WTC11 (cell line): ENCODE measurements at regions of chr10 and their contacts with region 1.

Region 1: GRCh38 chr10:32256613-32257437 is 90.1 kb downstream of the EPC1 start:
- DNase-seq: peak; percentile 69
- ATAC-seq: peak; percentile 61
- H3K4me3 Mint-ChIP-seq: no peak overlapping the region
- H3K27ac Mint-ChIP-seq: 0 out of 2 replicates have a peak overlapping the region, but pooled peaks have one; percentile 60
- H3K4me1 Mint-ChIP-seq: peaks cover 11% of the 10 kb centered on the region
- H3K27me3 Mint-ChIP-seq: no peaks in the 10 kb centered on the region
- CTCF ChIP-seq: peak; percentile 72

Region 2: GRCh38 chr10:32180371-32181280 is 76.2 kb before region 1 on chr10:
- CTCF ChIA-PET with region 1: no interaction called
- POLR2A ChIA-PET with region 1: no interaction called
- DNase-seq: no peak
- ATAC-seq: no peak
- H3K4me3 Mint-ChIP-seq: no peak overlapping the region
- H3K27ac Mint-ChIP-seq: no peak overlapping the region
- H3K4me1 Mint-ChIP-seq: no peaks in the 10 kb centered on the region
- H3K27me3 Mint-ChIP-seq: no peaks in the 10 kb centered on the region
- CTCF ChIP-seq: no peak

Region 3: GRCh38 chr10:32266979-32267378 is 10.2 kb after region 1 on chr10:
- CTCF ChIA-PET with region 1: interaction called, 16 read pairs
- POLR2A ChIA-PET with region 1: interaction called, 4 read pairs
- DNase-seq: peak; percentile 38
- ATAC-seq: peak; percentile 98
- H3K4me3 Mint-ChIP-seq: peak overlapping the region; percentile 40
- H3K27ac Mint-ChIP-seq: peak overlapping the region; percentile 89
- H3K4me1 Mint-ChIP-seq: peaks cover 39% of the 10 kb centered on the region
- H3K27me3 Mint-ChIP-seq: no peaks in the 10 kb centered on the region
- CTCF ChIP-seq: no peak

Region 4: DNA sequence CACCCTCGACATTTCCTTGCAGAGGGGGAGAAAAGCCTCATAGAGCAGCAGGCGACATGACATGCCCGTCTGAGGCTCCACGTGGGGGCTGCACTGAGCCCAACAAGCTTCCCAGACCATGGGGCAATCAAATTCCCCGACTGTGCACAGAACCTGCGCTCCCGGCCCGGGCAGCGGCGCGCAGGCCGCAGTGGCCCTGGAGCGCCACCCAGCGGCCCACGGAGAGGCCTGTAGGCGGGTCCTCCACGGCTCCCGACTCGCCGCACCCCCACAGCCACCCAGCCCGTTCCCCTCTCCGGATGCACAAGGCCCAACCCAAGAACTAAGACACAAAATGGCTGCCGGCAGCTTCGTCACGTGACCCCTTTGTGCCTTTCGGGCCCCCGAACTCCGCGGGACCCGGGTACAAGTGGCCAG is 89.3 kb after region 1 on chr10:
- CTCF ChIA-PET with region 1: interaction called, 20 read pairs
- POLR2A ChIA-PET with region 1: no interaction called
- DNase-seq: peak; percentile 94
- ATAC-seq: peak; percentile 92
- H3K4me3 Mint-ChIP-seq: peak overlapping the region; percentile 81
- H3K27ac Mint-ChIP-seq: peak overlapping the region; percentile 99
- H3K4me1 Mint-ChIP-seq: peaks cover 54% of the 10 kb centered on the region
- H3K27me3 Mint-ChIP-seq: no peaks in the 10 kb centered on the region
- CTCF ChIP-seq: peak; percentile 75